Activated CD4-positive, alpha-beta T cell treated with anti-CD3 and anti-CD28 coated beads, Interleukin-2, amount 10 ng/mL, durations not matched to agents 24 days and 14 days (primary cell): ENCODE measurements at regions of chr5 and their contacts with region 1.

Region 1: DNA sequence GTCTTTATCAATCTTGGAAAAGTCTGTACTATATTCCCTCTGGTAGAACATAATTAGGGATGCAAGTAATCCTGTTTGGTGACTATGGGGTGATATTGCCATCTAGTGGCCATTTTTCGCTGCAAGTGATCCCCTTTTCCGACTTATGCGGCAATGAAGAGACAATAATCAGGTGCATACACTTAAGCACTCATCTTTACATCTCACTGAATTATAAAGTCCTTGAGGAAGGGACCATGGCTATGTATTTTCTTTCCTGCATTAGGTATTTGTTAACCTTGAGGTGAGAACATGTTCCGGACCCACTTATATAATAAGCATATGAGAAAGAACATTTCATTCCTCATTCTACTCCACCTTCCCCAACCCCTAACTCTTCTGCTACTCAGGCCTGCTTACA is 19.6 kb upstream of the LIX1 start:
- DNase-seq: peak; percentile 87
- H3K4me3 Mint-ChIP-seq: no peak overlapping the region
- H3K27ac Mint-ChIP-seq: no peak overlapping the region
- H3K4me1 Mint-ChIP-seq: peaks cover 5% of the 10 kb centered on the region
- H3K27me3 Mint-ChIP-seq: no peaks in the 10 kb centered on the region

Region 2: GRCh38 chr5:96752341-96753016 is 409.6 kb before region 1 on chr5:
- intact Hi-C with region 1: loop called (anchors 1 kb)
- DNase-seq: peak; percentile 86
- H3K4me3 Mint-ChIP-seq: no peak overlapping the region
- H3K27ac Mint-ChIP-seq: no peak overlapping the region
- H3K4me1 Mint-ChIP-seq: no peaks in the 10 kb centered on the region
- H3K27me3 Mint-ChIP-seq: no peaks in the 10 kb centered on the region

Region 3: GRCh38 chr5:96997265-96997859 is 164.7 kb before region 1 on chr5:
- intact Hi-C with region 1: loop called (anchors 1 kb)
- DNase-seq: peak; percentile 67
- H3K4me3 Mint-ChIP-seq: no peak overlapping the region
- H3K27ac Mint-ChIP-seq: no peak overlapping the region
- H3K4me1 Mint-ChIP-seq: peaks cover 23% of the 10 kb centered on the region
- H3K27me3 Mint-ChIP-seq: no peaks in the 10 kb centered on the region